Right ventricle myocardium inferior (tissue), 1 donor: ENCODE measurements at regions of chr20 and their contacts with region 1.

Region 1: GRCh38 chr20:46307139-46307998 is 929 bp downstream of the CDH22 start:
- DNase-seq: peak; percentile 81
- ATAC-seq: peak; percentile 35

Region 2: DNA sequence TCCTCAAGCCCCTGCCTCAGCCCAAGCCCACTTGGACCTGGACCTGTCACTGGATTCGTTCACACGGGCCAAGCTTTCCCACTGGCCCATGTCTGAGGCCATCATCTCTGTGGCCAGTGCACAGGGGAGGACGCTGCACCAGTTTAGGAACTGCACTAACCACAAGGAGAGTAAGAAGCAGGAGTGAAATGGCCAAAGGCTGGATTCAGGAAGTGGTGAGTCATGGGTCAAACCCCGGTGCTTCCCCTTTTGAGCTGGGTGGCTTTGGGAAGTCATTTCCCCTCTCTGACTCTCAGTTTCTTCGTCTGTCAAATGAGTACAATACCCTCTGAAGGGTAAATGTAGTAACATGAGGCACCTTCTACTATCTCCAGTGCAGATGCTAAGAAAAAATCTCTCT is 101.3 kb before region 1 on chr20:
- intact Hi-C with region 1: loop called (anchors 5 kb)
- DNase-seq: no peak
- ATAC-seq: peak; percentile 61

Region 3: GRCh38 chr20:46222521-46223007 is 84.8 kb before region 1 on chr20:
- intact Hi-C with region 1: loop called (anchors 1 kb)
- DNase-seq: peak; percentile 79
- ATAC-seq: peak; percentile 96

Region 4: DNA sequence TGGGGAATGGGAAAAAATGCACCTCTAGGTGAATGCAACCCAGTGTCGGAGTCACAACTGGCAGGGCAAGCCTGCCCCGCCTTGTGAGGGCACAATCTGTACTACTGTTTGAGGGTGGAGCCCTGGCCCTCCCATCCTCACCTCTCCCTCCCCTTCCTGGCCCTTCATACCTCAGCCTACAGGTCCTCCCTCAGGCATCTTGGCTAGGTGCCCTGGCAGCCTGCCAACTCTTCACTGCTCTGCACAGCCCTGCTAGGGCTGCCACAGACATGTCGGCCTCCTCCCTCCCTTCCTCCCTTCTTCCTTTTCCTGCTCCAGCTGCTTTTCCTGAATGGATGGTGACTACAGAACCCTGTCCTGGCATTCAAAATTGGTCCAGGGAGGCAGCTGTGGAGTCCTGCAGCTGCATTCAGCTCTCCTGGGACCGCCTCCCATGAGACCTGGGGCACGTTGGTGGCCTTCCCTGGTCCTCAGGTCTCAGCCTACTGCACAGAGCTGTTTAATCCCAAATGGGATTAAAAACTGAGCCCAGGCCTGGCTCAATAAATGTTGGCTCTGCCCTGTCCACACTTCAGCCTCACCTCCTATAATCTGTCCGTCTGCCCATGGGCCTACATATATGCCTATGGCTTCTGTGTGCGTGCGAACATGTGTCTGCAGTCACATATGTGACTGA is 51.8 kb before region 1 on chr20:
- intact Hi-C with region 1: loop called (anchors 2 kb)
- DNase-seq: peak; percentile 87
- ATAC-seq: peak; percentile 66